RWPE1 (cell line): ENCODE measurements at regions of chr5 and their contacts with region 1.

Region 1: GRCh38 chr5:141960449-141961202 is 2.6 kb upstream of the PCDH12 start:
- DNase-seq: peak; percentile 88
- H3K27ac ChIP-seq: no peak overlapping the region
- CTCF ChIP-seq: peak; percentile 94

Region 2: DNA sequence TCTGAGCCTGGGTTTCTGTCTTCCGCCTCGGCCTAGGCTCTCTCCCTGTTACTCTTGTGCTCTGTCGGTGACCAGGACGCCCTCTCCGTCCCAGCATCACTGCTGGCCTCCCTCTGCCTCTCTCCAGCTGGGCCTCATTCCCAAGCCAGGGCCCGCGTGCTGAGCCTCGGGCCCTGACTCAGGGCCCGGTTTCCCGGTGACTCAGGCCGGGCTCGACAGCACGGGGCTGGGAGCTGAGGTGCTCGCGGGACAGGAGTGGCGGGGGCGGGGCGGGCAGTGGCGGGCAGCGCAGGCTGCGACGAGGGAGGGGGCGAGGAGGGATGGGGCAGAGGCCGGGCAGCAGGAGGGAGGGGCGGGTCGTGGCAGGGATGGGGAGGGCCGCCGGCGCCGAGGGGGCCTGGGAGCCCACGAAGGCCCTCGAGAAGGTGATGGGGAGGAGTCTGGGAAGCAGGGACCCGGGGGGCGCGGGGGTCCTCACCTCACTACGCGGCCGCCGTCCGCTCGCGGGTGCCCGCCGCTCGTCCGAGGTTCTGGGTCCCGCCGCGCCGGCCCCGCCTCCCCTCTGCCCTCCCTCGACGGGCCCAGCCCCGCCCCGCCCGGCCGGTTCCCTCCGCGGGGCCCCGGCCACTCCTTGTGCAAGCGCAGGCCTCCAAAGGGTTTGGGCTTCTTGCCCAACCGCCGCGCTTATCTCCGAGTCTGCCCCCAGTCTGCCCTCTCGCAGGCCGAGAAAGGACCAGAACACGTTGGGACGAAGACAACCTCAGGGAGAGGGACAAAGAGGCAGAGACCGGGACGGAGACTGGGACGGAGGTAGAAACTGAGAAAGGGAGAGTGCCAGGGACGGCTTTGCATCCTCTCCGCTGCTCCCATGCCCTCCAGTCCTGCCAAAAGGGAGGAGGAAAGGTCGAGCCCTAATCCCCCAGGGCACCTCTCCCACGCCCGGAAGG is 278.7 kb before region 1 on chr5 and contains the start of gene ARAP3:
- CTCF ChIA-PET with region 1: interaction called, 4 read pairs
- POLR2A ChIA-PET with region 1: interaction called, 10 read pairs
- DNase-seq: peak; percentile 95
- H3K27ac ChIP-seq: peak within 1 kb of the TSS; percentile 89
- CTCF ChIP-seq: no peak

Region 3: DNA sequence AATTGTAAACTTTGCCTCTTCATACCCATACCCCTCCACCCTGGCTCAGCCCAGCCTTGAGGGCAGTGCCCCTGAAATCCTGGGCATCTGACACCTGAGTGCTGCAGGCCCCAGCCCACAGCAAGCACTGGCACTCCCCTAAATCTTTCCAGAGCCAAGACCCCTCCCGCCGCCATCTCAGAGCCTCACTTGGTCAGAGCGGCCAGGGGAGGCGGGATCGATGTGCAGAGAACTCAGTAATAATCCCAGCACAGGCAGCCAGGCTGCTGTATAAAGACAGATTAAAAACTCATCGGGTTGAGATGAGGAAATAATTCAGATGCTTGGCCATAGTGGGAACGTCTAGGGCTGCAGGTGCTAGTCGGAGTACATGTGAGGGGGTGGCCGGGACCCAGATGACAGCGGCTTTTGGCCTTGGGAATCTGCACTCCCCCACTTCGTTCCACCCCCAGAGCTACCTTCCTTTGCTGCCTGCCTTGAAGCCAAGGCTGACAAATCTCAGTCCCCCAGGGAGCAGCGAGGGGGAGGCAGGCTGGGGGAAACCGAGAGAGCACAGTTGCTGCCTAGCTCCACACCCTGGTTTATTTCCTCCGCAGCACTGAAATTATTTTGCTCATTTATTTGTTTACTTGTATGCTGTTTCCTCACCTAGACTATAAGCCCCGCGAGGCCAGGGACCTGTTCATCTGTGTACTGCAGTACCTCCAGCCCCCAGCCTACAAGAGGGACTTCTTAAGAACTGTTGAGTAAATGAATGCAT is 259.1 kb before region 1 on chr5:
- CTCF ChIA-PET with region 1: interaction called, 102 read pairs
- POLR2A ChIA-PET with region 1: no interaction called
- DNase-seq: no peak
- H3K27ac ChIP-seq: no peak overlapping the region
- CTCF ChIP-seq: no peak

Region 4: GRCh38 chr5:141889282-141889871 is 71.2 kb before region 1 on chr5:
- CTCF ChIA-PET with region 1: interaction called, 55 read pairs
- POLR2A ChIA-PET with region 1: interaction called, 3 read pairs
- DNase-seq: no peak
- H3K27ac ChIP-seq: no peak overlapping the region
- CTCF ChIP-seq: peak; percentile 54

Region 5: DNA sequence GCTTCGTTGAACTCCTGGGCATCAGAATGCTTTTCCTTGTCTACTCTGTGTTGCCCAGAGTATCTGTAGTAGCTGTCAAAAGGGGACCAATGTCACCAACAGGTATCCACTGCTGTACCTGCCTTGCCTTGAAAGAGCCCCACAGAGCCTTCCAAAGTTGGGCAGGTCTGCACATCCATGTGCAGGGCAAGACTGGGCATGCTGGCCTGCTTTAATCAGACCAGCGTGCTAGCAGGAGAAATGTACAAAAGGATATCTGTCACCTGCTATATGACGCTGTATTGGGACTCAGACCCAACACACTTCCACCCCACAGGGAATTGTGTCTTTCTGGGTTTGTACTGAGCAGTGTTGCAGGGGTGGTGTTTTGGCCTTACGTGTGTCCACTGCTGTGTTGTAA is 25.1 kb before region 1 on chr5:
- CTCF ChIA-PET with region 1: interaction called, 21 read pairs
- POLR2A ChIA-PET with region 1: no interaction called
- DNase-seq: peak; percentile 80
- H3K27ac ChIP-seq: peak overlapping the region; percentile 34; the same call in 1 of the 2 replicates
- CTCF ChIP-seq: no peak

Region 6: GRCh38 chr5:142032747-142033631 is 72.4 kb after region 1 on chr5:
- CTCF ChIA-PET with region 1: no interaction called
- POLR2A ChIA-PET with region 1: no interaction called
- DNase-seq: no peak
- H3K27ac ChIP-seq: no peak overlapping the region
- CTCF ChIP-seq: no peak